ENCODE measurements at regions of chr2 and their contacts with region 1.

Region 1: GRCh38 chr2:152175458-152176325 is at the start of gene STAM2:
- DNase-seq: peak; percentile 63
- H3K4me3 ChIP-seq: peak within 1 kb of the TSS; percentile 67
- H3K27me3 ChIP-seq: no peaks in the 10 kb centered on the region
- CTCF ChIP-seq: peak; percentile 98
- polyA plus RNA-seq, gene STAM2: 12.4 and 23.5 TPM in 2 replicates

Region 2: DNA sequence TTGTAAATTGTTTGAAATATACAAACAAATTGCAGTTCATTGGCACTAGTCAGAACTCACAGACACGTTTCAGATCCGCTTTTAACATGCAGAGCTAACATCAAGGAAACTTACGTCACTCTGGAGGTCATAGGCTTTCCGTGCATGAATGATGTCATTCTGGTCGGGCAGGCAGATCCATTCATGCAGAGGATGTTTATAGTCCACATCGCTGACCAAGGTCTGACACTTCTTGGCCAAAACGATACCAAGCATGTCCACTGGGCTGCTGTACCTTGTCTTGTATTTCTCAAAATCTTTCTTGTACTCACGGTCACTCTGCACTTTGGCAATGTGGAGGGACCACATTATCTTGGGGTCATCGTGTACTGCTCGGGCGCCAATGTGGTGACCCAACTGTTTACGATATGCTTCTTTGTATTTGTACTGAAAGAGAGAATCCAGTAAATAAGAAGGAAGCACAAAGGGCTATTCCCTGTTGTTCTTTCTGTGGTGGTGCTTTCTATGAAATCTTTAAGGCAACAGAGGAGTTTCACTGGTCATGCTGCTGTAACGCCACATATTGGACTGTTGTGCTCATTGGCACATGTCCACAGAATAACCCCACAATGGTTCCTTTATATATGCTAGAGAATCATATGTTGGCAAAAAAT is 556.2 kb before region 1 on chr2:
- CTCF ChIA-PET with region 1: no interaction called
- POLR2A ChIA-PET with region 1: no interaction called
- DNase-seq: no peak
- H3K4me3 ChIP-seq: no peak overlapping the region
- H3K27me3 ChIP-seq: no peaks in the 10 kb centered on the region; the same call in 1 of the 2 replicates
- CTCF ChIP-seq: no peak

Region 3: GRCh38 chr2:151959238-151959637 is 216.5 kb before region 1 on chr2:
- CTCF ChIA-PET with region 1: no interaction called
- POLR2A ChIA-PET with region 1: no interaction called
- DNase-seq: no peak
- H3K4me3 ChIP-seq: no peak overlapping the region
- H3K27me3 ChIP-seq: no peaks in the 10 kb centered on the region
- CTCF ChIP-seq: no peak

Region 4: DNA sequence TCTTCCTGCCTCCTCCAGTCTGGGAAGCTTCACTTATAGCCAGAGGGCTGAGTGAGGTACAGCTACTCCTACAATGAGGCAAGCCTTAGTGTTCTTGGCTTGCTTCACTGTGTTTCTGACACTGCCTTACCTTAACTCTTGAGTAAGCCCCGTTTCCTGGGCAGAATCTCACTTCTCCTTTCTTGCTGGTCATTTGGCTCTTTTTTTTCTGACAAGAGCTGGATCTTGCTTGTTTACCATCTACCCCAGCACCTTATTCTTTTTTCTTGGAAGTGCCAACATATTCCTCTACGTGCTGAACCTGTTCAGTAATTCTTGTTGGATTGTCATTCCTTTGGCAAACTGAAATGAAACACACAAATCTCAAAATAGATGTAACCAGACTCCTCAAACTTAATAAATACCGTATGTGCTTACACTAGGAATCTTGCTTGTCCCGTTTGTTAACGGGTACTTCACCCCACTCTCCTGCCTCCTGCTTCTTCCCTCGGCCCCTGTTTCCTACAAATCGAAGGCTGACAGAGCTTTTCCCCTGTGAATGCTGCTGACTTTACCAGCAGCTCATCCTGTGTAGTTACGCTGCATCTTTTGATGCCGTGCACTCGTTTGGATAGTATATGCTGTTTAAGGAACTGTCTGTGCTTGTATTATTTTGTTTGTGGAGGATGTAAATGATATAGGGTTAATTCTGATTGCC is 291.4 kb after region 1 on chr2:
- CTCF ChIA-PET with region 1: no interaction called
- POLR2A ChIA-PET with region 1: no interaction called
- DNase-seq: no peak
- H3K4me3 ChIP-seq: no peak overlapping the region
- H3K27me3 ChIP-seq: no peaks in the 10 kb centered on the region
- CTCF ChIP-seq: no peak

Region 5: GRCh38 chr2:152648336-152648735 is 472.6 kb after region 1 on chr2:
- CTCF ChIA-PET with region 1: interaction called, 15 read pairs
- POLR2A ChIA-PET with region 1: no interaction called
- DNase-seq: no peak
- H3K4me3 ChIP-seq: no peak overlapping the region
- H3K27me3 ChIP-seq: no peaks in the 10 kb centered on the region
- CTCF ChIP-seq: peak; percentile 33; the same call in 1 of the 2 replicates